Heart left ventricle (tissue), 16 donors: ENCODE measurements at regions of chr17 and their contacts with region 1.

Region 1: GRCh38 chr17:31558748-31559644 is 167.5 kb downstream of the RAB11FIP4 start:
- DNase-seq: peak; percentile 83 to 89 (median 84)
- ATAC-seq: peak; percentile 70 to 94 (median 88)
- H3K4me3 ChIP-seq: peak overlapping the region; percentile 51 to 79 (median 64)
- H3K27ac ChIP-seq: peak overlapping the region; percentile 65 to 96 (median 92)
- H3K4me1 ChIP-seq: peaks cover 0 to 43% (median 32%) of the 10 kb centered on the region in 12 donors
- H3K27me3 ChIP-seq: no peaks in the 10 kb centered on the region
- CTCF ChIP-seq: peak; percentile 56 to 98 (median 92)
- POLR2A ChIP-seq: peak in 1 of 2 donors; percentile 60

Region 2: GRCh38 chr17:31570951-31571892 is 12.2 kb after region 1 on chr17:
- intact Hi-C with region 1: no loop called
- DNase-seq: peak; percentile 81 to 92 (median 88)
- ATAC-seq: peak; percentile 83 to 90 (median 87)
- H3K4me3 ChIP-seq: no peak overlapping the region
- H3K27ac ChIP-seq: peak overlapping the region; percentile 20 to 84 (median 68)
- H3K4me1 ChIP-seq: peaks cover 4 to 65% (median 51%) of the 10 kb centered on the region in 12 donors
- H3K27me3 ChIP-seq: no peaks in the 10 kb centered on the region
- CTCF ChIP-seq: no peak
- POLR2A ChIP-seq: no peak

Region 3: DNA sequence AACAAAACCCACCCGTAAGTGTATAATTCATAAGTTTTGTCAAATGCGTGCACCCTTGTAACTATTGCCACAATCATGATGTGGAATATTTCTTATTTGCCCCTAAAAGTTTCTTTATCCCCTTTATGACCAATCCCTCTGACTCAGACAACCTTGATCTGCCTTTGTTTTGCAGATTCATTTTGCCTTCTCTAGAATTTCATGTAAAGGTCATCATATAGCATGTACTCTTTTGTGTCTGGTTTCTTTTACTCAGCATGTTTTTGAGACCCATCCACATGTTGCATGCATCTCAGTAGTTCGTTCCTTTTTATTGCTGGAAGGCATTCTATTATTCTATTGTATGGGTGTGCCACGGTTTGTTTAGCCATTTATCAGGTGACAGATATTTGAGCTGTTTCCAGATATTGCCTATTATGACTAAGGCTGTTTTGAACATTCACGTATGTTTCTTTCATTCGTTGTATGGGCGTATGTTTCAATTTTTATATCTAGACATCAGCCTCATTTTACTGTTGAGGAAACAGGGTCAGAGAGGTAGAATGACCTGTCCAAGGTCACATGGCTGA is 24.9 kb after region 1 on chr17:
- intact Hi-C with region 1: no loop called
- DNase-seq: no peak
- ATAC-seq: no peak
- H3K4me3 ChIP-seq: no peak overlapping the region
- H3K27ac ChIP-seq: no peak overlapping the region
- H3K4me1 ChIP-seq: peaks cover 5 to 58% (median 27%) of the 10 kb centered on the region in 12 donors
- H3K27me3 ChIP-seq: no peaks in the 10 kb centered on the region
- CTCF ChIP-seq: no peak
- POLR2A ChIP-seq: no peak

Region 4: GRCh38 chr17:31596382-31597323 is 37.7 kb after region 1 on chr17:
- intact Hi-C with region 1: loop called in 1 of 10 experiments (anchors 5 kb)
- DNase-seq: peak; percentile 80 to 90 (median 86)
- ATAC-seq: peak; percentile 95 to 98 (median 96)
- H3K4me3 ChIP-seq: no peak overlapping the region
- H3K27ac ChIP-seq: peak overlapping the region in 11 of 12 donors; percentile 77 to 94 (median 86)
- H3K4me1 ChIP-seq: peaks cover 0 to 28% (median 17%) of the 10 kb centered on the region in 12 donors
- H3K27me3 ChIP-seq: no peaks in the 10 kb centered on the region
- CTCF ChIP-seq: peak in 1 of 12 donors; percentile 36
- POLR2A ChIP-seq: peak in 1 of 2 donors; percentile 22

Region 5: GRCh38 chr17:31609996-31610910 is 51.3 kb after region 1 on chr17:
- intact Hi-C with region 1: no loop called
- DNase-seq: no peak
- ATAC-seq: no peak
- H3K4me3 ChIP-seq: no peak overlapping the region
- H3K27ac ChIP-seq: no peak overlapping the region
- H3K4me1 ChIP-seq: no peaks in the 10 kb centered on the region
- H3K27me3 ChIP-seq: no peaks in the 10 kb centered on the region
- CTCF ChIP-seq: no peak
- POLR2A ChIP-seq: no peak

Region 6: GRCh38 chr17:31726980-31727427 is 168.0 kb after region 1 on chr17:
- intact Hi-C with region 1: no loop called
- DNase-seq: no peak
- ATAC-seq: no peak
- H3K4me3 ChIP-seq: no peak overlapping the region
- H3K27ac ChIP-seq: no peak overlapping the region
- H3K4me1 ChIP-seq: peaks cover 0 to 26% (median 12%) of the 10 kb centered on the region in 12 donors
- H3K27me3 ChIP-seq: no peaks in the 10 kb centered on the region
- CTCF ChIP-seq: no peak
- POLR2A ChIP-seq: no peak

Region 7: GRCh38 chr17:31740611-31741082 is 181.7 kb after region 1 on chr17:
- intact Hi-C with region 1: loop called in 4 of 10 experiments (anchors 2 to 10 kb)
- DNase-seq: no peak
- ATAC-seq: no peak
- H3K4me3 ChIP-seq: no peak overlapping the region
- H3K27ac ChIP-seq: peak overlapping the region in 5 of 12 donors; percentile 43 to 80 (median 70)
- H3K4me1 ChIP-seq: peaks cover 6 to 63% (median 22%) of the 10 kb centered on the region in 12 donors
- H3K27me3 ChIP-seq: peaks cover 0 to 4% (median 0%) of the 10 kb centered on the region in 9 donors
- CTCF ChIP-seq: no peak
- POLR2A ChIP-seq: no peak

Region 8: DNA sequence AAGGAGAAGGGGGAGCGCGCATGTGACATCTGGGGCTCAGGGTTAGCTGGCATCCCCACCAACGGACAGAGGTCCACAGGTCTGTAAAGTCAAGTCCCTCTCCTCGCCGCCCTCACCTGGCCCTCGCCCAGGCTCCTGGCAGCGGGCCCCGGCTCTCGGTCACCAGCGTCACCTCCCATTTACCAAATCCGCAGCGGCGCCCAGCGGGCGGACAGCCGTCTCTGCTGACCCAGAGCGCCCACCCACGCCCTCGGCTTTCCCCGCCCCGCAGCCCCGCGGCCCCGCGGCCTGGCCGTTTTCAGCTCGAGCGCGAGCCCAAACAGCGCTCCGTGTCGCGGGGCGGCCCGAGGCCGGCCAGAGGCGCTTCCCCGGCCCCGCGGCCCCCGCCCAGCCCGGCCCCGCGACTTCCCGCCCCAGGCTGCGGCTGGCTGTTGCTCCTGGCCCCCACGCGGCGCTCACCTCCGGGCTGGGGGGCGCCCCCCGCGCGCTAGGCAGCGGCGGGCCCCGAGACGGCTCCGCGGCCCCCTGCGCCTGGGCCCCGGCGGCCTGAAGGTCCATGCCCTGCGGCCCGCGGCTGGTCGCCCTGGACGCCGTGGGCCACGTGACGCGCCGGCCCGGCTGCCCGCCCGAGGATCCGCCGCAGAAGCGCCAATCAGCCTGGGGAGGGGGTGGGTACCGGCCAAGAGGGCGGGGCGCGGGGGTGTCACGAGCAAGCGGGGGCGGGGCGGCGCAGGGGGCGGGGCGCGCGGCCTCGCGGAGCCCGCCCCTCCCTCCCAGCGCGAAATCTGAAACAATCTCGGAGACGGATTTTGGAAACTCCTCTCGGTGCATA is 299.9 kb after region 1 on chr17 and contains the start of gene COPRS:
- intact Hi-C with region 1: loop called in 3 of 10 experiments (anchors 1 to 5 kb)
- DNase-seq: peak; percentile 91 to 95 (median 94)
- ATAC-seq: peak; percentile 80 to 93 (median 92)
- H3K4me3 ChIP-seq: peak within 1 kb of the TSS; percentile 41 to 95 (median 74)
- H3K27ac ChIP-seq: peak within 1 kb of the TSS; percentile 40 to 91 (median 80)
- H3K4me1 ChIP-seq: peaks cover 0 to 22% (median 17%) of the 10 kb centered on the region in 12 donors
- H3K27me3 ChIP-seq: no peaks in the 10 kb centered on the region
- CTCF ChIP-seq: peak in 6 of 12 donors; percentile 13 to 52 (median 32)
- POLR2A ChIP-seq: peak in 1 of 2 donors; percentile 26
- total RNA-seq, gene COPRS: 39.9 to 104 (median 51.6) TPM